ENCODE measurements at regions of chr4 and their contacts with region 1.

Region 1: GRCh38 chr4:154551872-154552686 is 1.9 kb upstream of the PLRG1 start:
- DNase-seq: peak; percentile 37
- H3K4me3 ChIP-seq: no peak overlapping the region
- H3K27me3 ChIP-seq: no peaks in the 10 kb centered on the region
- CTCF ChIP-seq: peak; percentile 81

Region 2: DNA sequence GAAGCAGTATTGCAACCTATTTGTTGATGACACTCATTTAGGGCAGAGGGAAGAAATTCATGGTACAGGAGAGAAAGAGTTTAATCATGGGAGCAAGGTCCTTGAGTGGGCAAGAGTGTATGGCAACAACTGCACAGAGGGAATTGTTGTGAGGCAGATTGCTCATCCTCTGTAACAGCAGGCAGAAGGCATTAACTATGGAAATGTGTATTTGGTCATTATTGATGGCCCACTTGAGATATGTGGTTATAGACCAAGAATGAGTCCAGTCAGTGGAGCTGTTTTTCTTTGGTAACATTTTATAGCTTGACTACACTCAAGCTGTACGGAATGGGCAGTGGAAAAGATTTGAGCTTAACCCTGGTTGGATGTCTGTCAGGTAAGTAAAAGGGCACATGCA is 17.8 kb before region 1 on chr4:
- CTCF ChIA-PET with region 1: interaction called, 11 read pairs
- POLR2A ChIA-PET with region 1: no interaction called
- DNase-seq: no peak
- H3K4me3 ChIP-seq: no peak overlapping the region
- H3K27me3 ChIP-seq: no peaks in the 10 kb centered on the region
- CTCF ChIP-seq: no peak